ENCODE measurements at regions of chr11 and their contacts with region 1.

Region 1: GRCh38 chr11:123054301-123055065 is 7.5 kb downstream of the HSPA8 start:
- DNase-seq: no peak
- ATAC-seq: peak; percentile 82
- H3K4me3 ChIP-seq: no peak overlapping the region
- H3K27ac ChIP-seq: no peak overlapping the region
- H3K4me1 ChIP-seq: peaks cover 21% of the 10 kb centered on the region
- H3K27me3 ChIP-seq: no peaks in the 10 kb centered on the region
- CTCF ChIP-seq: peak; percentile 86

Region 2: DNA sequence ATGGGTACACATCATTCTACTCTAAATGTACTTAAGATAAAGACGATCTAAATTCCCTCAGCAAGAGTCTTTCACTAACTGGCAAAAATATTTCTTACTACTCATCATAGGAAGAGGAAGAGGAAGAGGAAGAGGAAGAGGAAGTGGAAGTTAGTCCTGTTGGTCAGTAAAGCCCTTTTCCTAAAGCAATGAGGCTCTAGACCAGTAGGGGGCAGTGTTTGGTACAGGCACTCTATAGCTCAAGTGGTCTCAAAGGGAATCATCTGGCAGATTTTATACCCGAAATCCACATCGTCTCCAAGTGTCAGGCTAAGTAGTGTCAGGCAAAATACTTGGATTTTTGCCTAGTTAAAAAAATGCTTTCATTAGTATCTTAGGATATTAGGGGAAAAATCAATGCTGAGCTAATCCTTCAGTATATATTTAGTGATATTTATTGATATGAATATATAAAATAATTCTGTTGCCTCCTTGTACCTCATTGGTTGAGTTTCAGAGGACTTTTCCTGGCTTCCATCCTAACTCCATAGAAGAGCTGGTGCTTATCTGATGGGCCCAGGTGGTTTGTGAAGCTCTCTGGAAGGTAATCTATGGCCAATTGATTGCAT is 946.2 kb before region 1 on chr11:
- CTCF ChIA-PET with region 1: no interaction called
- POLR2A ChIA-PET with region 1: interaction called, 13 read pairs
- in situ Hi-C with region 1: no loop called
- intact Hi-C with region 1: no loop called
- DNase-seq: no peak
- ATAC-seq: no peak
- H3K4me3 ChIP-seq: no peak overlapping the region
- H3K27ac ChIP-seq: no peak overlapping the region
- H3K4me1 ChIP-seq: no peaks in the 10 kb centered on the region; the same call in 1 of the 2 replicates
- H3K27me3 ChIP-seq: no peaks in the 10 kb centered on the region
- CTCF ChIP-seq: peak; percentile 87

Region 3: GRCh38 chr11:122863704-122864326 is 190.7 kb before region 1 on chr11:
- CTCF ChIA-PET with region 1: interaction called, 15 read pairs
- POLR2A ChIA-PET with region 1: no interaction called
- in situ Hi-C with region 1: no loop called
- intact Hi-C with region 1: loop called (anchors 10 kb)
- DNase-seq: no peak
- ATAC-seq: no peak
- H3K4me3 ChIP-seq: no peak overlapping the region
- H3K27ac ChIP-seq: no peak overlapping the region
- H3K4me1 ChIP-seq: peaks cover 4% of the 10 kb centered on the region; the same call in 1 of the 2 replicates
- H3K27me3 ChIP-seq: no peaks in the 10 kb centered on the region
- CTCF ChIP-seq: peak; percentile 90; the same call in 1 of the 2 replicates

Region 4: DNA sequence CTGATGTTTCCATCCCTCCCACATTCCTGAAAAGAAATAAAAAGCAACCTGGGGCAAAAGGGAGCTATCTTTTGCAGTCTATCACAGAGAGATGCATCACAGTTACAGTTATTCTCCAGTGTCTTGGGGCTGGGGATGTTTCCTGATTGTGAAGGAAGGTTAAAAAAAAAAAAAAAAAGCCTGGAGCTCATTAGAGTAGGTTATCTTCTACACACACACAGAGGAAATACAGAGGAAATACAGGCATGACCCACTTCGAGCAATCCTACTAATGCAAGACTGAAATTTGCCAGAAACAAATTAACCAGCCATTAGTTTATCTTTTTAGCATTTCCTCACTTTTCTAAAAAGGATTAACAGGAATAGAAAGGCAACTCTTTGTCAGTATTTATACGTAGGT is 230.0 kb after region 1 on chr11:
- CTCF ChIA-PET with region 1: no interaction called
- POLR2A ChIA-PET with region 1: interaction called, 17 read pairs
- in situ Hi-C with region 1: no loop called
- intact Hi-C with region 1: no loop called
- DNase-seq: no peak
- ATAC-seq: no peak
- H3K4me3 ChIP-seq: no peak overlapping the region
- H3K27ac ChIP-seq: no peak overlapping the region
- H3K4me1 ChIP-seq: no peaks in the 10 kb centered on the region
- H3K27me3 ChIP-seq: peaks cover 40% of the 10 kb centered on the region
- CTCF ChIP-seq: no peak